ENCODE measurements at regions of chr14 and their contacts with region 1.

Region 1: GRCh38 chr14:92783816-92784431 is 10.2 kb upstream of the GOLGA5 start:
- DNase-seq: peak in 3 of 7 donors; percentile 40 to 69 (median 56)
- H3K4me3 ChIP-seq: no peak overlapping the region
- H3K27ac ChIP-seq: no peak overlapping the region
- H3K4me1 ChIP-seq: peaks cover 8 to 16% of the 10 kb centered on the region in 2 donors
- H3K27me3 ChIP-seq: no peaks in the 10 kb centered on the region
- CTCF ChIP-seq: peak; percentile 47 to 91 (median 71)
- POLR2A ChIP-seq: no peak

Region 2: GRCh38 chr14:92507174-92507768 is 276.7 kb before region 1 on chr14:
- intact Hi-C with region 1: no loop called
- DNase-seq: no peak
- H3K4me3 ChIP-seq: no peak overlapping the region
- H3K27ac ChIP-seq: no peak overlapping the region
- H3K4me1 ChIP-seq: peaks cover 7 to 12% of the 10 kb centered on the region in 2 donors
- H3K27me3 ChIP-seq: no peaks in the 10 kb centered on the region
- CTCF ChIP-seq: no peak
- POLR2A ChIP-seq: no peak

Region 3: DNA sequence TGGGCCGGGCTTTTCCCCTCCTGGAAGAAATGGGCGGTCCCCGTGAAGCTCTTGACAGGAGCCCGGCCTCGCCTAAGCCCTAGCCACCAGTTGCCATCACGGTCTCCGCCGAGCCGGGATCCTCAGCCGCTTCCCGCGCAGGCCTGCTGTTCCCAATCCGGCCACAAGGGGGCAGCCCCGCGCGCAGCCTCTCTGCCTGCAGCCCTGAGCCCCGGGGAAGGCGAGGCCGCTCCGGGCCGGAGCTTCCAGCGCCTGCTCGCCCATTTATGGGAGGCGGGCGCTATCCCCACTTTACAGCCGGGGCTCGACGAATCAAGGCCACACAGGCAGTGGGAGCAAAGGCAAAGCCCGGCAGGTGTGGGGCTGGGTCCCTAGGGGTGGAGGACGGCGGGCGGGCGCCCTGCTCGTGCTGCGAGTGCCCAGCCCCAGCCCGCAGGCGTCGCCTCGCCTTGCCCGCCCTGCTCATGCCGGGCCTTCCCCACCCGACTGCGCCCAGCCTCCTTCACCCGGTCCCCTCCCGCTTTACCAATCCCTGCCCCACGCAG is 97.0 kb before region 1 on chr14:
- intact Hi-C with region 1: loop called in 1 of 2 experiments (anchors 10 kb)
- DNase-seq: peak; percentile 64 to 90 (median 83)
- H3K4me3 ChIP-seq: peak overlapping the region in 1 of 4 donors; percentile 50
- H3K27ac ChIP-seq: no peak overlapping the region
- H3K4me1 ChIP-seq: peaks cover 6 to 9% of the 10 kb centered on the region in 2 donors
- H3K27me3 ChIP-seq: no peaks in the 10 kb centered on the region
- CTCF ChIP-seq: peak; percentile 79 to 100 (median 98)
- POLR2A ChIP-seq: peak in 1 of 2 donors; percentile 5

Region 4: GRCh38 chr14:92696366-92696765 is 87.6 kb before region 1 on chr14:
- intact Hi-C with region 1: loop called in 1 of 2 experiments (anchors 5 kb)
- DNase-seq: no peak
- H3K4me3 ChIP-seq: no peak overlapping the region
- H3K27ac ChIP-seq: no peak overlapping the region
- H3K4me1 ChIP-seq: peaks cover 12 to 15% of the 10 kb centered on the region in 2 donors
- H3K27me3 ChIP-seq: no peaks in the 10 kb centered on the region
- CTCF ChIP-seq: no peak
- POLR2A ChIP-seq: no peak

Region 5: GRCh38 chr14:92712654-92713051 is 71.3 kb before region 1 on chr14:
- intact Hi-C with region 1: loop called (anchors 2 to 5 kb)
- DNase-seq: no peak
- H3K4me3 ChIP-seq: no peak overlapping the region
- H3K27ac ChIP-seq: no peak overlapping the region
- H3K4me1 ChIP-seq: no peaks in the 10 kb centered on the region
- H3K27me3 ChIP-seq: no peaks in the 10 kb centered on the region
- CTCF ChIP-seq: no peak
- POLR2A ChIP-seq: no peak

Region 6: DNA sequence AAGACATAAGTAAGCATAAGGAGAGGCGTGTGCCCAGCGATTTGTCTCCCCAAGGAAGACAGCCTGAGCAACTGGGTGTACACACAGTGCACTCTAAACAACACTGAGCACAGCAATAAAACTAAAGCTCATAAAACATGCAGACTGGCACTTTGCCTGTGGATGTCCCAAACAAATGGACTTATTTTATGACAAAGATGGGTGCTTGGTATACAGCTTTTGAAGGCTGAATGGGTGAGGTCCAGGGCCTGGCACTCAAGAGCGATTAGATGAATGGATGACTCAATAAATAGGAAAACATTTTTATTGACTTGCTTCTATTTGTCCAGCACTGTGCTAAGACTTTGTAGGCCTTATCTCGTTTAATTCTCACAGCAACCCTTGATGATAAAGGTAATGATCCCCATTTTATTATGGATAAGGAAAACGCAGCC is 64.0 kb before region 1 on chr14:
- intact Hi-C with region 1: loop called (anchors 2 to 5 kb)
- DNase-seq: no peak
- H3K4me3 ChIP-seq: no peak overlapping the region
- H3K27ac ChIP-seq: no peak overlapping the region
- H3K4me1 ChIP-seq: no peaks in the 10 kb centered on the region
- H3K27me3 ChIP-seq: no peaks in the 10 kb centered on the region
- CTCF ChIP-seq: no peak
- POLR2A ChIP-seq: no peak

Measured in adrenal gland (tissue), 19 donors.